Aorta (tissue), 5 donors: ENCODE measurements at regions of chr1 and their contacts with region 1.

Region 1: GRCh38 chr1:203273206-203273868 is 32.0 kb upstream of the BTG2 start:
- DNase-seq: peak; percentile 91 to 96
- ATAC-seq: peak; percentile 86
- H3K4me3 ChIP-seq: no peak overlapping the region
- H3K27ac ChIP-seq: peak overlapping the region; percentile 55 to 71
- H3K4me1 ChIP-seq: peaks cover 0 to 4% of the 10 kb centered on the region in 2 donors
- H3K27me3 ChIP-seq: no peaks in the 10 kb centered on the region

Region 2: GRCh38 chr1:203304919-203305808 is 31.8 kb after region 1 on chr1 and contains the start of gene BTG2:
- intact Hi-C with region 1: loop called (anchors 2 to 5 kb)
- DNase-seq: peak; percentile 96 to 98
- ATAC-seq: peak; percentile 95
- H3K4me3 ChIP-seq: peak within 1 kb of the TSS; percentile 66 to 81
- H3K27ac ChIP-seq: peak within 1 kb of the TSS; percentile 86 to 98
- H3K4me1 ChIP-seq: peaks cover 0 to 3% of the 10 kb centered on the region in 2 donors
- H3K27me3 ChIP-seq: no peaks in the 10 kb centered on the region
- total RNA-seq, gene BTG2: 51.6 to 302 TPM

Region 3: GRCh38 chr1:203340112-203340804 is 66.9 kb after region 1 on chr1:
- intact Hi-C with region 1: loop called (anchors 1 to 2 kb)
- DNase-seq: peak in 1 of 2 donors; percentile 70
- ATAC-seq: peak; percentile 82
- H3K4me3 ChIP-seq: no peak overlapping the region
- H3K27ac ChIP-seq: no peak overlapping the region
- H3K4me1 ChIP-seq: no peaks in the 10 kb centered on the region
- H3K27me3 ChIP-seq: no peaks in the 10 kb centered on the region

Region 4: DNA sequence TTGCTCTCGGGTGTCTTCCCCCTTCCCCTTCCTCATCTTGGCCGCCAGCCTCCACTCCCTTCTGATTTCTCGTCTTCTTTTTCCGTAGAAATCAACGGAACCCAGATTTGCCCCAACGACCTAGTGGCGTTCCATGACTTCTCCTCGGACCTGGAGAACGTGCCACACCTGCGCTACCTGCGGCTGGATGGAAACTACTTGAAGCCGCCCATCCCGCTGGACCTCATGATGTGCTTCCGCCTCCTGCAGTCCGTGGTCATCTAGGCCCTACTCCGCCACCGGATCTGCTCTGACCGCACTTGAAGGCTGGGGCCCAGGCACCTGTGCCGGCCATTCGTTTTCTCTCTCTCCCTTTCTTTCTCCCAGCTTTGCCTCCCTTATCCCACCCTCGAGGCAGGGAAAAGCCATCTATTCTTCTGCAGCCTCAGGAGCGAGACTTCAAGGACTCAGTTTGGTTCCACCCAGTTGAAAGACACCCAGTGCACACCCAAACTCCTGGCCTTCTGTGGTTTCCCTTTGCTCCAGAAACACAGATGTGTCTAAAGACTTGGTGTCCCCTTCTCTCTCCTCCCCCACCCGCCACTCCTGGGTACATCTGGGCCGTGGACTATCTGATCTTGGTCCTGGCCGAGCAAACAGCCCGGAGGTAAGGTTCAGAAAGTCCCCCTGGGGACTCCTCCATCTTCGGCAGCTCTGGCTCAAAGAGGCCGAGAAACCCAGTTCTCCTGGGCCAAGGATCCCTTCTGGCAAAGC is 213.5 kb after region 1 on chr1:
- intact Hi-C with region 1: loop called (anchors 2 to 5 kb)
- DNase-seq: no peak
- ATAC-seq: no peak
- H3K4me3 ChIP-seq: no peak overlapping the region
- H3K27ac ChIP-seq: peak overlapping the region in 1 of 2 donors; percentile 23
- H3K4me1 ChIP-seq: no peaks in the 10 kb centered on the region
- H3K27me3 ChIP-seq: no peaks in the 10 kb centered on the region